Cardiac septum (tissue), 1 donor: ENCODE measurements at regions of chr5 and their contacts with region 1.

Region 1: DNA sequence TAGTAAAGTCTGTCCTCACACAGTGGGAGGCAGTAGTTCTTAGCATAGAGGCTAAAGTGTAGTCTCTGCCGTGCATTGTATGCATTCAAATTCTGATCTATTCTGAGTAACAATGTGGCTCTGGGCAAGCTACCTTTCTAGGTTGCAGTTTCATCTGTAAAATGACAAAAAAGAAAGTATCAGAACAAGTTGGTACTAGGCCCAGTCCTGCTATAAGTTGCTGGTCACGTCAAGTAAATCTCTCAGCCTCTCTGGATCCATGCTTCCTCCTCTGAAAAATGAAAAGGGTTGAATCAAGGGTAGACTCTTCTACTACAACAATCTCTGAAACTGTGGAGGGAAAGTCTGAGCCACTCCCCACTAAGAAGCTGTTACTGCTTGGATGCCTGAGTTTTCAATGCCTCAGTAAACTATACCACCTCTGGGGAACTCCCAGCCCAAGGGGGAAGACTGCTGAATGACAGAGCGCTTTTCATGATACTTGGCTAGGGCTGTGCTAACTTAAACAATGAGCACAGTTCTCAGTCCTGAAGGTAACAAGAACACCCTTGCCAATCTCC is 34.5 kb upstream of the SPARC start:
- DNase-seq: no peak

Region 2: DNA sequence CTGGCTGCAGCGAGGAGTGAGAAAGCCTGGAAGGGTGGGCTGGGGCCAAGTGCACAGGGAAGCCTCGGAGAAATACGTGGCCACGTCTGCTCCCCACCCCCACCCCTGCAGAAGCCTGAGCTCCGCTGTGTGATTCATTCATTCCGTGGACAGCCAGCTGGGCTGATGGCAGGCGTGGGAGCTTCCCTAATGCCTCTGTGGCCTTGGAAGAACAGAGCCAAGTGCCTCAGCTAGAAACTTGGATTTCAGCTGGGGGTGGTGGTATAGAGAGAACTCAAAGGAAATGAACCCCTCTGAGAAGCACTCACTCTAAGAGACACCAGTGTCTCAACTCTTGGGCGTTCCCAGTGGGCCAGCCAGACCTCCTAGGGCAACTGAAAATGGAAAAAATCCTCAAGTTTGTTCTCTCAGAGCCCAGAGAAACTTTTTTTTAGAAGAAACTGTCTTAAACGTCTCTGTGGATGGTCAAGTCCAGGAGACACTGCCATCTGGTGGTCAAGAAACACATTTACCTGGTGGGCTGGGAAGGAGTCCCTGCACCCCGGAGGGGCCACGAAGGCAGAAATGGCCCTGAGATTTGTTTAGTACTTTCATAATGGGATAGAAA is 19.3 kb after region 1 on chr5:
- intact Hi-C with region 1: loop called (anchors 1 kb)
- DNase-seq: no peak

Region 3: GRCh38 chr5:151771259-151772028 is 50.3 kb after region 1 on chr5 and contains the start of gene G3BP1:
- intact Hi-C with region 1: no loop called
- DNase-seq: peak; percentile 100
- total RNA-seq, gene G3BP1: 99.4 TPM

Region 4: GRCh38 chr5:151912360-151912759 is 191.2 kb after region 1 on chr5:
- intact Hi-C with region 1: no loop called
- DNase-seq: no peak